Activated CD4-positive, alpha-beta memory T cell treated with anti-CD3 and anti-CD28 coated beads, Interleukin-2, amount 10 ng/mL, durations not matched to agents 7 days and 5 days (primary cell): ENCODE measurements at regions of chr17 and their contacts with region 1.

Region 1: DNA sequence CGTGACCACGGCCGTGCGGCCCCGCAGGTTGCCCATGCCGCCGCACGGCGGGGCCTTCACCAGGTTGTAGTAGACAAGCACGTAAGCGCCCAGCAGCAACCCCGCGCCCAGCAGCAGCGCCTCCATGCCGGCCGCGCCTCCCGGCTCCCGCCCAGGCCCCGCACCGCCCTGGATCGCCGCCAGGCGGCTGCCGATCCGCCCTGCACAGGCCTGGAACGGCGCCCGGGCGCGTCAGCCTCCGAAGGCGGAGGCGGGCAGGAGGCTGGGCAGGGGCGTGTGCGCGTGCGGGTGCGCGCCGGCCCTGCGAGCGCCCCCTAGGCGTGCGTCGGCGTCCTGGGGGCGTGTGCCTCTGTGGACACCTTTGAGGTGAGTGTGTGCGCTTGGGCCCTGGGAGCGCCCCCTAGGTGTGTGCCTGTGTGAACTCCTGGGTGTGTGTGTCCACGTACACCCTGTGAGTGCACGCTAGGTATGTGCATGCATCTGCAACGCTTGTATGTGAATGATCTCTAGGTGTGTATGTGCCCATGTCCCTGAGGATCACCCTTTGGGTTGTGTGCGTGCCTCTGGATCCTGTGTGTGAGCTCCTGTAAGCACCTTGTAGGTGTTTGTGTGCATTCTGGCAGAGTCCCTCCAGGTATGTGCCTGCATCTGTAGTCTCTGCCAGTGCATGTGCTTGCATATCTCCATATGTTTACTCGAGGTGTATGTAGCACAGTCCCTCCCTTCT is at the start of gene DHRS13:
- DNase-seq: peak; percentile 94
- H3K4me3 Mint-ChIP-seq: peak within 1 kb of the TSS; percentile 79
- H3K27ac Mint-ChIP-seq: peak within 1 kb of the TSS; percentile 78
- H3K4me1 Mint-ChIP-seq: peaks cover 48% of the 10 kb centered on the region
- H3K27me3 Mint-ChIP-seq: no peaks in the 10 kb centered on the region
- total RNA-seq, gene DHRS13: 25.2 to 25.7 TPM

Region 2: DNA sequence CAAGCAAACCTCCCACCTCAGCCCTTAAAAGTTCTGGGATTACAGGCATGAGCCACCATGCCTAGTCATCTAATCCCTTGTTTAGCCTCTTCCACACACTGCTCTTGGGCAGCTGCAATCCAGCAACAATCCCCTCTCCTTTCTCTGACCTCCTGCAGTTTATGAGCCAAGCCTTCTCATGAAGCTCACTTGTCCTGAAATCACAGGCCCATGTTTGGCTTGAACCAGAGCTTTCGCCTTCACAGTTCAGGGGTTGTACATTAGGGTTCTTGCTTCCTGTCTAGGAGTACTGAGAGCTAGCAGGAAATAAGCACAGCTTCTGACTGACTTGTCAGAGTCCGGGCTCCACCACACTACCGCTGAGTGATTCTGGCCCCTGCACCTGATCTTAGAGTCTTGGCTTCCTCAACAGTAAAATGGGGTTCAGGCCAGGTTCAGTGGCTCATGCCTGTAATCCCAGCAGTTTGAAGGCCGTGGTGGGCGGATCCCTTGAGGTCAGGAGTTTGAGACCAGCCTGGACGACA is 31.9 kb before region 1 on chr17:
- CTCF ChIA-PET with region 1: interaction called, 11 read pairs
- POLR2A ChIA-PET with region 1: interaction called, 12 read pairs
- DNase-seq: peak; percentile 67
- H3K4me3 Mint-ChIP-seq: no peak overlapping the region
- H3K27ac Mint-ChIP-seq: peak overlapping the region; percentile 89
- H3K4me1 Mint-ChIP-seq: peaks cover 21% of the 10 kb centered on the region
- H3K27me3 Mint-ChIP-seq: no peaks in the 10 kb centered on the region

Region 3: GRCh38 chr17:28889996-28890395 is 13.0 kb before region 1 on chr17:
- CTCF ChIA-PET with region 1: interaction called, 29 read pairs
- POLR2A ChIA-PET with region 1: interaction called, 39 read pairs
- DNase-seq: no peak
- H3K4me3 Mint-ChIP-seq: no peak overlapping the region
- H3K27ac Mint-ChIP-seq: peak overlapping the region; percentile 47
- H3K4me1 Mint-ChIP-seq: peaks cover 54% of the 10 kb centered on the region
- H3K27me3 Mint-ChIP-seq: no peaks in the 10 kb centered on the region